Astrocyte of the cerebellum (primary cell): ENCODE measurements at regions of chr12 and their contacts with region 1.

Region 1: DNA sequence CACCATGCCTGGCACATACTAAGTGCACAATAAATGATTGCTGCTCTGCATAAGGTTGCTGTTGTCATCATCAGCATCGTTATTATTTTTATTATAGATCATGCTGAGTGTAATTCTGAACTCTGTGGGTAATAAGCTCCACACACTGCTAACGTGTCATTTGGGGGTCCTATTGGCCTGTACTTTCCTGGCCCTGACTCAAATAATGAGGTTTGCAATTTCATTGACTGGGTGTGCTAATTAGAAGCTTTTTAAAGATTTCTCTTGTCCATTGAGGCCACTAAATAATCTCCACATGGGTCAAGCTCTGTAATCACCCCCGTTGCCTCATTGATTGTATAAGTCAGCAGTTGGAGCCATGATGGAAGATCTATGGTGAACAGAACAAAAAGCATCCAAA is 320.8 kb upstream of the TMPO start:
- DNase-seq: no peak
- H3K4me3 ChIP-seq: no peak overlapping the region
- CTCF ChIP-seq: no peak

Region 2: DNA sequence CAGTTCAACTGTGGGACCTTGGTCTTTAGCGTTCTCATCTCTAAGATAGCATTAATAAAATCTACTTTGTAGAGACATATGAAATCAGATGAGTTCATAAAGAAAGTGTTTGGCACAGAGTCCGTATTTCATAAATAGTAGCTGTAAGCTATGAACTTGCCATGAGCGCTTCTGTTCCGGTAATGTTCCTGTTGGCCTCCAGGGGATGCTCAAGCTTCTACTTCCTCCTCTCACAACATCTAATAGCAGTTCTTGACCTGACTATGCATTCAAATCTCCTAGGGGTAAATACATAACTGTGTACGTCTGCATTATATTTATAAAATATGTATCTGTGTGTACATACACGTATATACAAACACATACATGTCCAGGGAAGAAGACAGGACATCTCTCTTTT is 32.6 kb after region 1 on chr12:
- in situ Hi-C with region 1: loop called (anchors 5 kb)
- DNase-seq: no peak
- H3K4me3 ChIP-seq: no peak overlapping the region
- CTCF ChIP-seq: peak; percentile 36